PC-3 (cell line): ENCODE measurements at regions of chr3 and their contacts with region 1.

Region 1: GRCh38 chr3:15982667-15983145 is 184.9 kb upstream of the ANKRD28 start:
- DNase-seq: peak; percentile 93
- ATAC-seq: peak; percentile 95
- H3K4me3 ChIP-seq: peak overlapping the region; percentile 60
- H3K27ac ChIP-seq: peak overlapping the region; percentile 90
- H3K4me1 ChIP-seq: peaks cover 23% of the 10 kb centered on the region
- H3K27me3 ChIP-seq: no peaks in the 10 kb centered on the region
- CTCF ChIP-seq: no peak

Region 2: DNA sequence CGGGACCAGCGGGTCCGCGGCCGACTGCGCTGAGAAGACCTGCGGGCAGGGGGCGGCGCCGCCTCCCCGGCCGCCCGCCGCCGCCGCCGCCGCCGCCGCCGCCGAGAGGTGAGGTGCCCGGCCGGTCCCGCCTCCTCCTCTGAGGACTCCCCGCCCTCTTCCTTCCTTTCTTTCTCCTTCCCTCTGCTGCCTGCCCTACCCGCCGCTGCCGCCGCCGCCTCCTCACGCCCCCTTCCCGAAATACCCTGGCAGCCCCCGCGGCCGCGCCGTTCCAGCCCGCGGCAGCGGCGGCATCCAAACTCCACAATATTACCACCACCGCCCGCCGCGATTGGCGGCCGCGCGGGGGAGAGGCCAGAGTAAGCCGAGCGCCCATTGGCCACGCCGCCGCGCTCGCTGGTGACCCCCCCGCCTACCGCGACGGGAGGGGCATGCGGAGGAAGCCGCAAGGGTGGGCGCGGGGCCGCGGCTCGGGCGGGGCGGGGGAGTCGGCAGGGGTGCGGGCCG is 123.1 kb before region 1 on chr3:
- CTCF ChIA-PET with region 1: no interaction called
- POLR2A ChIA-PET with region 1: interaction called, 4 read pairs
- intact Hi-C with region 1: loop called (anchors 1 kb)
- DNase-seq: peak; percentile 94
- ATAC-seq: peak; percentile 80
- H3K4me3 ChIP-seq: peak overlapping the region; percentile 80
- H3K27ac ChIP-seq: no peak overlapping the region
- H3K4me1 ChIP-seq: peaks cover 23% of the 10 kb centered on the region
- H3K27me3 ChIP-seq: no peaks in the 10 kb centered on the region
- CTCF ChIP-seq: no peak

Region 3: DNA sequence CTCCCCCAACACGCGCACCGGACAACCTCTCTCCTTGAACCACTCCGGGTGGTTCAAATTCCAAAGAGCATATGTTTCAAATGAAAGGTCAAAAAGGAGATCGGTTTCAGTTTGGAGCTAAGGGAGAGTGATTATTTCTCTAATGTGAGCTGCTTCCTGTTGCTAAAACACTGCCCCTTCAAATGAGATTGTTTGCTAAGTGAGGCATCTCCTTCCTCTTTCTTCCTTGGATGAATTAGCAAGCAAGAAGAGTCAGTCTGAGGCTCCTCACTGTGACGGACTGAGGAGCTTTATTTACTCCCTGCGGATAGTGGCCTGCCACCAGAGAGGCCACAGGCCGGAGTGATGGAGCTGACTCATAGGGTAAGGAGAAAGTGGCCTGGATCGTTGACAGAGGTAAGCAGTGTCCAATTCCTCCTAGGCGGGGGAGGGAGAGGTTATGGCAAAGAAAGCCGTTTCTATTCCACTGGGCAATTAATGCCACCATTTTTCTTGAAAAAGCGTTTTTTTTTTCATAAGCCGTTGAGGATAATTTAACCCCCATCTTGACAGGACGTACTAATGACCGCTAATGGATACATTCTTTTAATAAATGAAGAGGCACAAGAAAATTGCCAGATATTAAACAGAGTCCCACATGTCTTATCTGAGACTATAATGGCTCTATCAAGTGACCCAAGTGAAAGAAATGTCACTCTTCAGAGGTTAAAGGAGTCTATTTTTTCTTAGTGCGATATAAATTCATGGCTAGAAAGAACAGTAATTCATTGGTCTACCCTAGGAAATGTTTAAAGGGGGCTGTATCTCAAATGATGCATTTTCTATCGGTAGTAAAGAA is 17.9 kb before region 1 on chr3:
- CTCF ChIA-PET with region 1: no interaction called
- POLR2A ChIA-PET with region 1: interaction called, 3 read pairs
- intact Hi-C with region 1: loop called (anchors 2 kb)
- DNase-seq: peak; percentile 75
- ATAC-seq: peak; percentile 99
- H3K4me3 ChIP-seq: peak overlapping the region; percentile 39; the same call in 1 of the 2 replicates
- H3K27ac ChIP-seq: peak overlapping the region; percentile 44
- H3K4me1 ChIP-seq: peaks cover 18% of the 10 kb centered on the region
- H3K27me3 ChIP-seq: no peaks in the 10 kb centered on the region
- CTCF ChIP-seq: no peak

Region 4: GRCh38 chr3:16028604-16029003 is 45.9 kb after region 1 on chr3:
- CTCF ChIA-PET with region 1: no interaction called
- POLR2A ChIA-PET with region 1: no interaction called
- intact Hi-C with region 1: no loop called
- DNase-seq: no peak
- ATAC-seq: no peak
- H3K4me3 ChIP-seq: no peak overlapping the region
- H3K27ac ChIP-seq: no peak overlapping the region
- H3K4me1 ChIP-seq: no peaks in the 10 kb centered on the region
- H3K27me3 ChIP-seq: no peaks in the 10 kb centered on the region
- CTCF ChIP-seq: no peak

Region 5: DNA sequence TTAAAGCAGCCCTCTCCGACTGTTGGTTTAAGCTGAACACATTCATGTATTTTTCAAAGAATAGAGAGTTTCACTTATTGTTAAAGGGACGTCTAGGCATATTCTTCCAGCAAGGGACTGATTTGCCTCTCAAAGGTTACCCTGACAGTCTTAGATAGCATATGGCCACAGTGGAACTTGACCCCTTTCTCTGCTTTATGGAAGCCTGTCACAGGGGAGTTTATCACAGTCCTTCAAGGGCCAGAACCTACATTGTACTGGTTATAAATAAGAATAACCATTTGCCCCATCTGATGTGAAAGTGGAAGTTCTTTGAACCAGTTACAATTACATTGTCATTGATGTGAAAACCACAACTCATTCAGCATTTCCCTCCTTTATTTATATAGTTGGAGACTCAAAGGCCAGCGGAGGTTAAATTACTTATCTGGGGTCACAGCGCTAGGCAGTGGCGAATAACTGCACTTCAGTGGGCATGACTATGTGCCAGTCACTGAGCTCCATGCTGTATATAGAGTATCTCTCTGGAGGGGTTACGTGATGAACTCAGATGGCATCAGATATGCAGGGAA is 1820.2 kb after region 1 on chr3:
- CTCF ChIA-PET with region 1: no interaction called
- POLR2A ChIA-PET with region 1: no interaction called
- intact Hi-C with region 1: loop called (anchors 10 kb)
- DNase-seq: no peak
- ATAC-seq: no peak
- H3K4me3 ChIP-seq: no peak overlapping the region
- H3K27ac ChIP-seq: no peak overlapping the region
- H3K4me1 ChIP-seq: peaks cover 22% of the 10 kb centered on the region
- H3K27me3 ChIP-seq: no peaks in the 10 kb centered on the region
- CTCF ChIP-seq: no peak